ENCODE measurements at regions of chr17 and their contacts with region 1.

Region 1: DNA sequence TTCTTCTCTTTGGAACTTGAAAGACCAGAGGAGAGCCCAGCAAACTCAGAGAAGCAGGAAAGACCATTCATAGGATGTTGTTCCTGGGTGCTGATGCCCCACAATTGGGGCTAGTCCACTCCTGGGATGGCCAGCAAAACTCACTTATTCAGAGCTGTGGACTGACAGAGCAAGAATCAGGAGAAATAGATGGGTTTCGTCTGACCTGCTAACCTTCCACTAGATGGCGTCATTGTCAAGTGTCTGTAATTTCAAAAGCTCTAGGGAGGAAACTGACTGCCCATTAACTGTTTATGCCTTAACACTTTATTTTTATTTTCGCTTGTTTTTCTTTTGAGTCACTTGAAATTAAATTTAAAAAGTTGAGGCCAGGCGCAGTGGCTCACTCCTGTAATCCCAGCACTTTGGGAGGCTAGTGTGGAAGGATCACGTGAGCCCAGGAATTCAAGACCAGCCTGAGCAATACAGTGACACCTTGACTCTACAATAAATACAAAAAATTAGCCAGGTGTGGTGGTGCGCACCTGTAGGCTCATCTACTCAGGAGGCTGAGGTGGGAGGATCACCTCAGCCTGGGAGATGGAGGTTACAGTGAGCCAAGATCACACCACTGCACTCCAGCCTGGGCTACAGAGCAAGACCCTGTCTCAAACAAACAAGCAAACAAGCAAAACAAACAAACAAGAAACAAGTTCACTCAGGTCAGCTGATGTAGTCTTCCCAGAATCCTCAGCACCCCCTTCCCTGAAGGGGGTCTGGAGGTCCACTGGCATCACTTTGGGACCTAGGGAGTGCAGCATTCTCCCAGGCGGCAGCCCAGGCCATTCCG is 28.6 kb upstream of the MILR1 start:
- DNase-seq: peak; percentile 85
- H3K4me3 ChIP-seq: no peak overlapping the region
- H3K27ac ChIP-seq: no peak overlapping the region
- H3K4me1 ChIP-seq: peaks cover 6% of the 10 kb centered on the region
- H3K27me3 ChIP-seq: no peaks in the 10 kb centered on the region
- CTCF ChIP-seq: peak; percentile 81

Region 2: DNA sequence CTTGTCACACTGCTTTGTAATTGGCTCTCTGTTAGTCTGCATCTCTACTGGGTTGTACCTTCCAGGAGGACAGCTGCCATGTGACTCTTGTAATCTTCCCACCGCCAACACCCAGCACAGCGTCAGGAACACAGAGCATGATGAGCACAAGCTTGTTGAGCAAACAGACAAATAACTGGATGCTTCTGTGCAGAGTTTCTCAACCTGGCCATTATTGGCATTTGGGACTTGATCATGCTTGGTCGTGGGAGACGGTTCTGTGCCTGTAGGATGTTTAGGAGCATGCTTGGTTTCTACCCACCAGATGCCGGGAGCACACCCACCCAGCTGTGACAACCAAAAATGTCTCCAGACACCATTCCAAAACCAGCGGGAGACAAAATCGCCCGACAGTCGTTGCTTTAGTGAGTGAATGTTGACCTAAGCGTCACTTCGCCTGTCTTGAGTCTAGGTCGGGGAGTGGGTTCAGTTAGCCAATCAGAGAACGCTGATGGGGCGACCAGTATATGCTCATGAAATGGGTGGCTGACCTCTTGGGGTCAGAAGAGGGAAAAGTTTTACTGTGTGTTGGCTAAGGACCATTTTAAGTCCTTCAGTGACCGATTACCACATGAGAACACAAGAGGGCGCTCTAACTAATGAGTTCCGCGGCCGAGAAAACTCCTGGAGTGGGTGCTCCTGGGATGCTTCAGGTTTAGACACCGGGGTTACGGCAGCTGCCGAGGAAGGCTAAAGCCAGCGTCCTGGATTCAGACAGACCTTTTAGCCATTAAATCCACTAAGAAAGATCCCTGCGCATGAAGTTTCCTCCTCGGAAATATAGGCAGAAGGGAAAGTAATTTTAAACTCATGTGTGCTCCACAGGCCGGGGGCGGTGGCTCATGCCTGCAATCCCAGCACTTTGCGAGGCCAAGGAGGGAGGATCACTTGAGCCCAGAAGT is 99.5 kb before region 1 on chr17:
- CTCF ChIA-PET with region 1: interaction called, 10 read pairs
- POLR2A ChIA-PET with region 1: no interaction called
- intact Hi-C with region 1: loop called (anchors 1 kb)
- DNase-seq: peak; percentile 85
- H3K4me3 ChIP-seq: no peak overlapping the region
- H3K27ac ChIP-seq: no peak overlapping the region
- H3K4me1 ChIP-seq: no peaks in the 10 kb centered on the region
- H3K27me3 ChIP-seq: no peaks in the 10 kb centered on the region
- CTCF ChIP-seq: peak; percentile 88

Region 3: GRCh38 chr17:64496786-64497564 is 76.6 kb after region 1 on chr17 and contains the start of gene POLG2:
- CTCF ChIA-PET with region 1: interaction called, 20 read pairs
- POLR2A ChIA-PET with region 1: no interaction called
- intact Hi-C with region 1: loop called (anchors 5 kb)
- DNase-seq: peak; percentile 97
- H3K4me3 ChIP-seq: peak within 1 kb of the TSS; percentile 88
- H3K27ac ChIP-seq: peak within 1 kb of the TSS; percentile 84
- H3K4me1 ChIP-seq: peaks cover 15% of the 10 kb centered on the region
- H3K27me3 ChIP-seq: no peaks in the 10 kb centered on the region
- CTCF ChIP-seq: peak; percentile 58
- total RNA-seq, gene POLG2: 25.6 and 31.5 TPM in 2 replicates

Region 4: DNA sequence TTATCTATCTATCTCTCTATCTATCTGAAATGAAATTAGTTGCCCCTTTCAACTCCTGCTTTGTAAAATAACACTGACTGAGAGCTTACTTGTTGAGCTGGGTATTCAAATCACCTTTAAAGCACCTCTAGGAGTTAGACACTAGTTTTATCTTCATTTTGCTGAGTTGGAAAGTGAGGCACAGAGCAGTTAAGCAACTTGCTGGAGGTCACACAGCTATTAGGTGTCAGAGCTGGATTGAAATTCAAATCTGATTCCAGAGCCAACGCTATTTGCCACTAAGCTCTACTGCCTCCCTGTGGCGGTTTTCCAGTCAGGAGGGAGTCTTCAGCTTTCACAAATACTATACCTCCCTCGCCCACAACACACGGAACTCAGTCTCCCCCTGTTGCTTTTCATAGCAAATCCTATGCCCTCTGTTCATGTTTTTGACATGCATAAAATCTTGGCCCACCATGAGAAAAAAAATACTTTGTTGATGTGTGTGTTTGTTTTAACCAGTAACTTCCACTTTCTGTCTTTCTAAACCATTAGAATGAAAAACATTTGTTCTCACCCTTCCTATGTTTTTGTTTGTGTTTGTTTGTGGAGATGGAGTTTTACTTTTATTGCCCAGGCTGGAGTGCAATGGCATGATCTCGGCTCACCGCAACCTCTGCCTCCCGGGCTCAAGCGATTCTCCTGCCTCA is 316.6 kb after region 1 on chr17:
- CTCF ChIA-PET with region 1: no interaction called
- POLR2A ChIA-PET with region 1: no interaction called
- intact Hi-C with region 1: loop called (anchors 5 kb)
- DNase-seq: peak; percentile 62
- H3K4me3 ChIP-seq: no peak overlapping the region
- H3K27ac ChIP-seq: no peak overlapping the region
- H3K4me1 ChIP-seq: peaks cover 14% of the 10 kb centered on the region
- H3K27me3 ChIP-seq: no peaks in the 10 kb centered on the region
- CTCF ChIP-seq: peak; percentile 63

Region 5: DNA sequence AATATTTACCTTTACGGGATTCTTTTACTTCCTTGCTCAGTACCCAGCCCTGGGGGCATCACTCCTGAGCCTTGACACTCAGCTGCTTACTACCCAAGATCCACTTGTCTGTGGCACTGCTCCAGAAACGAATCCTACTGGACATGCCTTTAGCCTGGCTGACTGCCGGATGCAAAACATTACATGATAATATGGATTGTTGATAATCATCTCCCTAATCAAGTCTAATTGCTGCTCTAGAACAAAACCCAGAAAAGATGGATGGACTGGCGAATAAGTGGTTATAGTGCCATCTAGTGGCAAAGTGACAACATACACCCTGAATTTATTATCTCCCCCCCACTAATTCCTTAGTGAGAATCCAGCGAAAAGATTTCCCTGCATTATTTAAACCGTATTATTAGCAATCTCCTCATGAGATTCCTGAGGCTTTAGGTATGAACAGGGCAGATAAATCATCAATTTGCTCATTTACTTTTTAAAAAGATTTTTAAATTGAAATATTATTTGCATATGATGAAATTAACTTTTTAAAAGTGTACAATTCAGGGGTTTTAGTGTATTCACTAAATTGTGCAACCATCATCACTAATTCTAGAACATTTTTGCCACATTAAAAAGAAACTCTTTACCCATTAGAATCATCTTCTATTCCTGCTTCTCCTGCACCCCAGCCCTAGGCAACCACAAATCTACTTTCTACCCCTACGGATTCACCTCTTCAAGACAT is 778.5 kb after region 1 on chr17:
- CTCF ChIA-PET with region 1: no interaction called
- POLR2A ChIA-PET with region 1: no interaction called
- intact Hi-C with region 1: loop called (anchors 10 kb)
- DNase-seq: peak; percentile 73
- H3K4me3 ChIP-seq: no peak overlapping the region
- H3K27ac ChIP-seq: no peak overlapping the region
- H3K4me1 ChIP-seq: no peaks in the 10 kb centered on the region
- H3K27me3 ChIP-seq: no peaks in the 10 kb centered on the region
- CTCF ChIP-seq: peak; percentile 80